ENCODE measurements at regions of chr12 and their contacts with region 1.

Region 1: GRCh38 chr12:4276524-4277204 is 3.1 kb downstream of the CCND2 start:
- DNase-seq: peak; percentile 96
- H3K4me3 ChIP-seq: peak overlapping the region; percentile 57
- H3K27ac ChIP-seq: peak overlapping the region; percentile 86
- H3K4me1 ChIP-seq: peaks cover 44% of the 10 kb centered on the region
- H3K27me3 ChIP-seq: no peaks in the 10 kb centered on the region
- CTCF ChIP-seq: peak; percentile 83

Region 2: GRCh38 chr12:3885277-3886094 is 391.2 kb before region 1 on chr12:
- intact Hi-C with region 1: loop called (anchors 2 kb)
- DNase-seq: peak; percentile 29
- H3K4me3 ChIP-seq: peak overlapping the region; percentile 21
- H3K27ac ChIP-seq: peak overlapping the region; percentile 52
- H3K4me1 ChIP-seq: peaks cover 3% of the 10 kb centered on the region
- H3K27me3 ChIP-seq: no peaks in the 10 kb centered on the region
- CTCF ChIP-seq: peak; percentile 64

Region 3: GRCh38 chr12:3998968-3999826 is 277.5 kb before region 1 on chr12:
- intact Hi-C with region 1: loop called (anchors 5 kb)
- DNase-seq: peak; percentile 50
- H3K4me3 ChIP-seq: no peak overlapping the region
- H3K27ac ChIP-seq: no peak overlapping the region
- H3K4me1 ChIP-seq: no peaks in the 10 kb centered on the region
- H3K27me3 ChIP-seq: no peaks in the 10 kb centered on the region
- CTCF ChIP-seq: no peak

Region 4: DNA sequence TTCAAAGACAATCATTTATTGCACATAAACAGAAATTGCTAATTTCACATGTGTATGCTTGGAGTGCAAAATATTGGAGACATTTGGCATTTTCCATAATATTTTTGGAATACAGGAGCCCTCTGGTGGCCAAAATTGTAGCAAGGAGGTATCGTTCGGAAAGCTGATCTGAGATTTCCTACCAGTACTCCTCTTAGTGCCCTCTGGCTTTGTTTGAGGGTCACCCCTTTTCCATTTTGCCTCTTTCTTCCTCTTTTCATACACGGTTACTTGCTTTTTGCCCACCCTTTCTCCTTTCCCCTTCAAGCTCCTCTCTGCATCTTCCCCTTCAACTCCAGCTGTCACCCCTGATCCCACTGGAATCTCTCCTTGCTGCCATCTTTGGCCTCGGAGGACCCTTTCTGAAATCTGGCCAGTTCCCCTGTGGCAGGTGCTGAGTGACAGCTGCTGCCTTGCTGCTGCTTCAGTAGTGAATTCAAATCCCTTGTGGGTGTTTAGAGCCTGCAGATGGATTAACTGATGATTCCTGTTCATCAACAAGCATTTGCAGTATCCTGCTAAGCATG is 238.8 kb before region 1 on chr12:
- intact Hi-C with region 1: loop called (anchors 2 kb)
- DNase-seq: peak; percentile 79
- H3K4me3 ChIP-seq: no peak overlapping the region
- H3K27ac ChIP-seq: peak overlapping the region; percentile 52
- H3K4me1 ChIP-seq: peaks cover 7% of the 10 kb centered on the region
- H3K27me3 ChIP-seq: no peaks in the 10 kb centered on the region
- CTCF ChIP-seq: peak; percentile 62

Region 5: GRCh38 chr12:4107436-4107878 is 169.2 kb before region 1 on chr12:
- intact Hi-C with region 1: loop called (anchors 5 kb)
- DNase-seq: peak; percentile 70
- H3K4me3 ChIP-seq: no peak overlapping the region
- H3K27ac ChIP-seq: no peak overlapping the region
- H3K4me1 ChIP-seq: no peaks in the 10 kb centered on the region
- H3K27me3 ChIP-seq: no peaks in the 10 kb centered on the region
- CTCF ChIP-seq: peak; percentile 71

Region 6: GRCh38 chr12:4148418-4149056 is 128.1 kb before region 1 on chr12:
- intact Hi-C with region 1: loop called (anchors 10 kb)
- DNase-seq: peak; percentile 67
- H3K4me3 ChIP-seq: no peak overlapping the region
- H3K27ac ChIP-seq: no peak overlapping the region
- H3K4me1 ChIP-seq: peaks cover 11% of the 10 kb centered on the region
- H3K27me3 ChIP-seq: no peaks in the 10 kb centered on the region
- CTCF ChIP-seq: no peak